Common myeloid progenitor, CD34-positive (primary cell): ENCODE measurements at regions of chr2 and their contacts with region 1.

Region 1: GRCh38 chr2:69538872-69539548 is 101.8 kb upstream of the NFU1 start:
- DNase-seq: no peak
- H3K4me3 ChIP-seq: no peak overlapping the region
- H3K27ac ChIP-seq: no peak overlapping the region
- H3K4me1 ChIP-seq: no peaks in the 10 kb centered on the region
- H3K27me3 ChIP-seq: no peaks in the 10 kb centered on the region

Region 2: GRCh38 chr2:69436938-69437750 is 101.9 kb before region 1 on chr2 and contains the start of gene NFU1:
- CTCF ChIA-PET with region 1: interaction called, 4 read pairs
- POLR2A ChIA-PET with region 1: interaction called, 10 read pairs
- DNase-seq: peak; percentile 98
- H3K4me3 ChIP-seq: peak within 1 kb of the TSS; percentile 79 to 96 (median 91)
- H3K27ac ChIP-seq: peak within 1 kb of the TSS; percentile 86 to 96
- H3K4me1 ChIP-seq: peaks cover 7 to 30% (median 24%) of the 10 kb centered on the region in 4 experiments
- H3K27me3 ChIP-seq: no peaks in the 10 kb centered on the region